Caco-2 (cell line): ENCODE measurements at regions of chr19 and their contacts with region 1.

Region 1: GRCh38 chr19:42132851-42133528 is 744 bp upstream of the POU2F2 start:
- DNase-seq: peak; percentile 69 to 89
- H3K4me3 ChIP-seq: peak overlapping the region; percentile 26
- H3K4me3 Mint-ChIP-seq: peak overlapping the region; percentile 6
- H3K27ac Mint-ChIP-seq: no peak overlapping the region
- H3K4me1 ChIP-seq: no peaks in the 10 kb centered on the region; the same call in 1 of the 2 replicates
- H3K4me1 Mint-ChIP-seq: no peaks in the 10 kb centered on the region
- H3K27me3 ChIP-seq: no peaks in the 10 kb centered on the region; the same call in 1 of the 2 replicates
- H3K27me3 Mint-ChIP-seq: peaks cover 21% of the 10 kb centered on the region
- CTCF ChIP-seq: peak; percentile 96 to 98

Region 2: DNA sequence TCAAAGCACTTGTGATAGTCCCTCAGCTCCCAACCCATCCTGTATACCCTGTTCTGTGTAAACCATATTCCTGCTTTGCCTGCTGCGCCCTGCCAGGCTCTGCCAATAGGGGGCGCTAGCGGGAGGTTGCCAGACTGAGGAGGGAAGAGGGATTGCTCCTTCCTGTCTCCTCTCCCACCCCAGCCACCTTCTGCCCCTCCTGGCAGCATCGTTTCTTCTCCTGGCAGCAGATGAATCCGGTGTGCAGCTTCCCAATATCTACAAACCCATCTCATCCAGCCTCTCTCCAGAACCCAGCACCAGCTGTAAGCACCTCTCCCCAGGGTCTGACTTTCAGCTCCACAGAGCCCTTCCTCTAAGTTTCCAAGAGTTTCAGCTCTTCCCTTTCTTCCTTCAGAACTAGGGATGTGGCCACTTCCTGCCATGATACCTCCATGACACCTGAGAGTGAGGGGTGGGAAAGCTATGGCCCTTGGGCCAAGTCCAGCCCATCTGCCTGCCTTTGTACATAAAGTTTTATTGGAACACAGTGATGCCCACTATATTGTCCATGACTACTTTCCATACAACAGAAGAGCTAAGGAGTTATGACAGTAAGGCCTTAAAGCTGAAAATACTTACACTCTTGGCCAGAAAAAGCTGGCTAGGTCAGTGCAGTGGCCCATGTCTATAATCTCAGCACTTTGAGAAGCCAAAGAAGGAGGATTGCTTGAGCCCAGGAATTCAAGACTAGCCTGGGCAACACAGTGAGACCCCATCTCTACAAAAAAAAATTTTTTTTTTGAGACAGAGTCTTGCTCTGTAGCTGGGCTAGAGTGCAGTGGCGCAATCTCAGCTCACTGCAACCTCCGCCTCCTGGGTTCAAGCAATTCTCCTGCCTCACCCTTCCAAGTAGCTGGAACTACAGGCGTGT is 104.4 kb before region 1 on chr19:
- CTCF ChIA-PET with region 1: no interaction called
- POLR2A ChIA-PET with region 1: no interaction called
- intact Hi-C with region 1: no loop called
- DNase-seq: peak in 1 of 2 experiments; percentile 38
- H3K4me3 ChIP-seq: no peak overlapping the region
- H3K4me3 Mint-ChIP-seq: no peak overlapping the region
- H3K27ac Mint-ChIP-seq: no peak overlapping the region
- H3K4me1 ChIP-seq: no peaks in the 10 kb centered on the region
- H3K4me1 Mint-ChIP-seq: no peaks in the 10 kb centered on the region
- H3K27me3 ChIP-seq: peaks cover 2% of the 10 kb centered on the region
- H3K27me3 Mint-ChIP-seq: peaks cover 13% of the 10 kb centered on the region
- CTCF ChIP-seq: peak; percentile 35 to 38

Region 3: GRCh38 chr19:42158926-42159325 is 25.9 kb after region 1 on chr19:
- CTCF ChIA-PET with region 1: no interaction called
- POLR2A ChIA-PET with region 1: no interaction called
- intact Hi-C with region 1: no loop called
- DNase-seq: no peak
- H3K4me3 ChIP-seq: no peak overlapping the region
- H3K4me3 Mint-ChIP-seq: no peak overlapping the region
- H3K27ac Mint-ChIP-seq: no peak overlapping the region
- H3K4me1 ChIP-seq: 0 out of 2 replicates have a peak, but pooled peaks cover 3% of the 10 kb centered on the region
- H3K4me1 Mint-ChIP-seq: no peaks in the 10 kb centered on the region
- H3K27me3 ChIP-seq: no peaks in the 10 kb centered on the region; the same call in 1 of the 2 replicates
- H3K27me3 Mint-ChIP-seq: peaks cover 34% of the 10 kb centered on the region
- CTCF ChIP-seq: no peak

Region 4: DNA sequence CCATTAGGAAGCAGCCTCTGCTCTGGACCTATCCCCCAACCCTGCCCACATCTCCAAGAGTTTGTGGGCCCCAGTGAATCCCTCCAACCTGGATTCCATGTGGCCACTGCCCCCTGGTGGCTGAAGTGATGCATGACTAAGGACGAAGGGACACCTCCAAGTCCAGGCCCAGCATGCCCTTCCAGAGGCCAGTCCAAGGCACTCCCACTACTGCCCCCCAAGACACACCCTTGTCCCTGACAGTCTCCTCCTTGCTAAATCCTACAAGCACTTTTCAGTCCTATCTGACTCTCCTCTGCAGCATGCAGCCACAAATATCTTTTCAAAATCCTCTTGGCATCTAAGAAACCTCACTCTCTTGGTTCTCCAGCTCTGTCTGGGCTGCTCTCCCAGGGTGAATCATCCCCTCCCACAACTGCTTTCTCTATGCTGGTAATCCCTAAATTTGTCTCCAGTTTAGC is 51.4 kb after region 1 on chr19:
- CTCF ChIA-PET with region 1: no interaction called
- POLR2A ChIA-PET with region 1: interaction called, 3 read pairs
- intact Hi-C with region 1: loop called (anchors 1 kb)
- DNase-seq: peak; percentile 77 to 84
- H3K4me3 ChIP-seq: no peak overlapping the region
- H3K4me3 Mint-ChIP-seq: no peak overlapping the region
- H3K27ac Mint-ChIP-seq: no peak overlapping the region
- H3K4me1 ChIP-seq: no peaks in the 10 kb centered on the region
- H3K4me1 Mint-ChIP-seq: no peaks in the 10 kb centered on the region
- H3K27me3 ChIP-seq: no peaks in the 10 kb centered on the region; the same call in none of the 2 replicates
- H3K27me3 Mint-ChIP-seq: peaks cover 10% of the 10 kb centered on the region
- CTCF ChIP-seq: peak; percentile 91 to 93

Region 5: DNA sequence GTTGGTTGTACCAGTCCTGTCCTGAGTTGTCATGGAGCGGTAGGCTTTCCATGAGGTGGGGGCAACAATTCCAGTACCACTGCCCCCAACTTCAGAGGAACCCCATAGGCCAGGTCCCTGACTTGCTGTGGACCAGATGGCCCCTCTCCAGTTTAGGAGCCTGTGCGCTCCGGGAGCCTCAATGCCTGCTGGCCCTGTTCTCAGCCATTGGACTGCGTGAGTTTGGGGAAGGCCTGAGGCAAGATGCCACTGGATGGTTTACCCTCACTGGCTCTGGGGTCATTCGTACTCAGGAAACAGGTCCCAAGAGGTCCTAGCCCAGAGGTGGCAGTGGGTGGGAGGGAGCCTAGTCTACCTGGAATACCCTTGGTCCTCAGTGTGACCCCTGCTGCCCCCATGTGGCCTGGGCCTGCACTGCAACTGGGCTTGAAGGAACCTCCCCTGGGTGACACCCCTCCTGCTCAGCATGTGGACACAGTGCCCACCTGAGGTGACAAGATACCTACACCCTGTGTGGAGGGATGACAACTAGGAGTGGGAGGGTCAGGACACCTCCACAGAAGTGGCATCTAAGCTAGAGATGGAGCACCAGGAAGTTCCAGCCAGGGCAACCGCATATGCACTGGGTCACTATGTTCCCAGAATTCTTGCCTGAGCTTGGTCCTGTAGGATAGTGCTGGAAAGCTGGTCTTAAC is 163.0 kb after region 1 on chr19:
- CTCF ChIA-PET with region 1: no interaction called
- POLR2A ChIA-PET with region 1: no interaction called
- intact Hi-C with region 1: loop called (anchors 1 kb)
- DNase-seq: peak; percentile 89 to 95
- H3K4me3 ChIP-seq: no peak overlapping the region
- H3K4me3 Mint-ChIP-seq: no peak overlapping the region
- H3K27ac Mint-ChIP-seq: no peak overlapping the region
- H3K4me1 ChIP-seq: peaks cover 4% of the 10 kb centered on the region; the same call in 1 of the 2 replicates
- H3K4me1 Mint-ChIP-seq: peaks cover 14% of the 10 kb centered on the region
- H3K27me3 ChIP-seq: no peaks in the 10 kb centered on the region
- H3K27me3 Mint-ChIP-seq: no peaks in the 10 kb centered on the region
- CTCF ChIP-seq: peak; percentile 97